OCI-LY7 (cell line): ENCODE measurements at regions of chr2 and their contacts with region 1.

Region 1: DNA sequence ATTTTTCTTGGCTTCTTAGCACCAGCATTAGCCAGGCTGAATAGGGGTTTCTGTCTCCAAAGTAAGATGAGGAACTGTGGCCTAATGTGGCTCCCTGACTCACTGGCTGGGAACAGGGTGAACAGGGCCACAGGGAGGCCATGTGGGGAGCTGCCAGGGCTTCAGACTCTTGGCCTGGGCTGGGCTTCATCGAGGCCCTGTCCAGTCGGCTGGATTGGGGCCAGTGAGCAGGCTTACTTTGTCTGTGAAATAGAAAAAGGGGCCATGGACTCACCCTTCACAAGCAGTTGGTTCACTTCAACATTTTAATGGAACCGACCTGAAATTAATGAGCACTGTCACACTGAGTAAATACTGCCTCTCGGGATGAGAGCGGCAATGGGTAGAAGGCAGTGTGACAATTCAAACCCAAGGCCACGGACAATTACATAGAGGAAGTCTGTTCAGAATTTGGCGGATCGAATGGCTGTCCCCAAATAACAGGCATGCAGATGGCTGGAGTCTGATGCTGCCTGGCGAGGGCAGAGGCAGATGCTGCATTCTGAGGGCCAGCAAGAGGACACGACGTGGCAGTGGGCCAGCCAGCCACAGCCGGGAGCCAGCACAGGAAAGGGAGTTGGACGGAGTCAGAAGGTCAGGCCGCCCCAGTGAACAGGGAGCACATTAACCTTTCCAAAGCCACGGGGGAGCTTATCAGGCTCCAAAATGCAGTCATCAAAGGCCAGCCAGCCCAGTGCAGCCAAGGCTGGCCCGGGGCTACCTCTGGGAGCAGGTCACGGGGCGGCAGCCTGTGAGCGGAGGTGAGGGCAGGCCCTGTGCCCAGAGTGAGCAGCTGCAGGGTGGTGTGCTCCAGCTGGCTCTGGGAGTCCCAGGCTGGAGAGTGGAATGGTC is 146.6 kb upstream of the REV1 start:
- DNase-seq: peak; percentile 41
- H3K4me3 ChIP-seq: peak overlapping the region; percentile 53
- H3K27ac ChIP-seq: peak overlapping the region; percentile 99
- H3K4me1 ChIP-seq: peaks cover 72% of the 10 kb centered on the region
- CTCF ChIP-seq: no peak

Region 2: DNA sequence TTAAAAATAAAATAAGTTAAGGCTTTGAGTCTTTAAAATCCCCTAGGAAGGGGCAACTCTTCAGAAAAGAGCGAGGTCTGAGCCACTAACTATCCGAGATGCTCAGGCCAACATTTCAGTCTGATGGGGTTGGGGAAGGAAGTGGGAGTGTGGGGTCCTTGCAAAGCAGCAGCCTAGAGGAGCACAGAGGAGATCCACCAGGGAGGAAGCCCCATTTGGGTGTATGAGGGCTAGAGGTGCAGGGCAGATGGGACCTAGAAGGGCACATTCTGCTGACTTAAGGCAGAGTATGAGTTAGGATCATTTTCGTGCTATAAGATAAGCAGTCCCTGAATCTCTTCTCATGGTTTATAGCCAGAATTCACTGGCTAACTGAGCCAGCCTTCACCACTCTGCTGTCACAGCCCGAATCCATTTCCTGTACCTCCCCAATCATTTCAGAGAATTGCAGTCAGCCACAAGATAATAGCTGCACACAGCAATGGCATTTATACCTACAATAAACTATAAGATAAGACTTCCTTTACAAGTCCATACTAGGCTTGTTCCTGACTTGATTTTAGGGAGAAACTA is 418.4 kb before region 1 on chr2:
- CTCF ChIA-PET with region 1: no interaction called
- POLR2A ChIA-PET with region 1: no interaction called
- intact Hi-C with region 1: no loop called
- DNase-seq: no peak
- H3K4me3 ChIP-seq: no peak overlapping the region
- H3K27ac ChIP-seq: no peak overlapping the region
- H3K4me1 ChIP-seq: no peaks in the 10 kb centered on the region
- CTCF ChIP-seq: no peak

Region 3: GRCh38 chr2:99559075-99559662 is 77.2 kb before region 1 on chr2:
- CTCF ChIA-PET with region 1: no interaction called
- POLR2A ChIA-PET with region 1: no interaction called
- intact Hi-C with region 1: loop called (anchors 1 kb)
- DNase-seq: peak; percentile 83
- H3K4me3 ChIP-seq: no peak overlapping the region
- H3K27ac ChIP-seq: no peak overlapping the region
- H3K4me1 ChIP-seq: no peaks in the 10 kb centered on the region
- CTCF ChIP-seq: peak; percentile 100

Region 4: DNA sequence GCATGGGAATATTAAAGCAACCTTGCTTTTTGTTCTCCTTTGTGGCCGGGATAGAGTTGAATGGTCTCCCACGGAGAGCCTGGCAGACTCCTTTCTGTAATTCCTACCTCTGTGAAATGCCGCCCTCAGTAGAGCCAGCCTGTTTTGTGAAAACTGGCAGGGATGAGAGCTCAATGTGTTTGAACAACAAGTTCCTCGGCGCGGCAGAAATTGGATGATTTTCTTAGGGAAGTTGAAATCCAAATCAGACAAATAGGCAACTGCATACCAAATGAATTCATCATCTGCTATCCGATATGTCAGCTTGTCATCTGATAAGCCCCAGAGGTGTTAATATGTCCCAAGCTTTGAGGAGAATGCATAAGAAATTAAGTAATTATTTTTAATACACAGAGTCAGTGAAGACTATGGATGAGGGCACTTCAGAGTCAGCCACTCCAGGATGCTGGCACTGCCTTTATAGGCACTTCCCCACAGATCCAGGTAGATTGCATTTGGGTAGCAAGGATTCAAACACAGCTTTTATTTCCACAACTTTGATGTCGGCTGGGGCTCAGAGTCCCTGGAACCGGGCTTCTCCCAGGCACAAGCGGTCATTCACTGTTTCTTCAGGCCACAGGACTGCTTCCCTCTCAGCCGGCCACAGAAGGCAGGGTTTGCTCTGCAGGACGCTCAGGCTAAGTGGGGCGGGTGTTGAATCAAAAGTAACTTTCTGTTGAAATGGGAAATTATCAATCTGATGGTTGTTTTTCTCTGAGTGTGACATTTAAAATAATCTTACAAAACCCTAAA is 63.8 kb before region 1 on chr2:
- CTCF ChIA-PET with region 1: no interaction called
- POLR2A ChIA-PET with region 1: no interaction called
- intact Hi-C with region 1: no loop called
- DNase-seq: no peak
- H3K4me3 ChIP-seq: no peak overlapping the region
- H3K27ac ChIP-seq: no peak overlapping the region
- H3K4me1 ChIP-seq: no peaks in the 10 kb centered on the region
- CTCF ChIP-seq: no peak

Region 5: GRCh38 chr2:99827296-99827999 is 191.1 kb after region 1 on chr2:
- CTCF ChIA-PET with region 1: no interaction called
- POLR2A ChIA-PET with region 1: no interaction called
- intact Hi-C with region 1: loop called (anchors 5 kb)
- DNase-seq: peak; percentile 83
- H3K4me3 ChIP-seq: peak overlapping the region; percentile 44
- H3K27ac ChIP-seq: peak overlapping the region; percentile 87
- H3K4me1 ChIP-seq: peaks cover 29% of the 10 kb centered on the region
- CTCF ChIP-seq: no peak

Region 6: DNA sequence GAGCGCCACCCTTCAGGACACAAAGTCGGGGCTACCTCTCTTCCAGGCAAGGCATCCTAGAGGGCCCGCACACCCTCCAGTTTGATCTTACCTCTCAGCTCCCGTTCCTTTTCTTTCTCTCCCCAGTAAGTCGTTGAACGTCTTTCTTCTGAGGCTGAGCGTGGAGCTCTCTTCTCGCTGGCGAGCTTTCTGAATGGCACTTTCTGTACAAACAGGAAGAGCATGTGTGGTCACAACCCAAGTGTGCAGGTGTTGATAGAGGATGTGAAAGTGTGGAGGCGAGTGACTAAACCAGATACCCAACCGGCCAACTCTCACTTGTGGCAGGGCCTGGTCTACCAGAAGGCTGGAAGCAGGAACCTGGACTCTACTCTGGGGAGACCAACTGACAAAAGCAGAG is 506.0 kb after region 1 on chr2 and contains the start of gene AFF3:
- CTCF ChIA-PET with region 1: no interaction called
- POLR2A ChIA-PET with region 1: no interaction called
- intact Hi-C with region 1: loop called (anchors 2 kb)
- DNase-seq: peak; percentile 99
- H3K4me3 ChIP-seq: peak within 1 kb of the TSS; percentile 91
- H3K27ac ChIP-seq: peak within 1 kb of the TSS; percentile 98
- H3K4me1 ChIP-seq: peaks cover 51% of the 10 kb centered on the region
- CTCF ChIP-seq: peak; percentile 17; the same call in 1 of the 2 replicates
- total RNA-seq, gene AFF3: 133 and 162 TPM in 2 replicates